OCI-LY7 (cell line): ENCODE measurements at regions of chr9 and their contacts with region 1.

Region 1: GRCh38 chr9:125428060-125428901 is 166.7 kb downstream of the GAPVD1 start:
- DNase-seq: peak; percentile 64
- H3K4me3 ChIP-seq: no peak overlapping the region
- H3K27ac ChIP-seq: no peak overlapping the region
- H3K4me1 ChIP-seq: no peaks in the 10 kb centered on the region
- CTCF ChIP-seq: peak; percentile 86

Region 2: DNA sequence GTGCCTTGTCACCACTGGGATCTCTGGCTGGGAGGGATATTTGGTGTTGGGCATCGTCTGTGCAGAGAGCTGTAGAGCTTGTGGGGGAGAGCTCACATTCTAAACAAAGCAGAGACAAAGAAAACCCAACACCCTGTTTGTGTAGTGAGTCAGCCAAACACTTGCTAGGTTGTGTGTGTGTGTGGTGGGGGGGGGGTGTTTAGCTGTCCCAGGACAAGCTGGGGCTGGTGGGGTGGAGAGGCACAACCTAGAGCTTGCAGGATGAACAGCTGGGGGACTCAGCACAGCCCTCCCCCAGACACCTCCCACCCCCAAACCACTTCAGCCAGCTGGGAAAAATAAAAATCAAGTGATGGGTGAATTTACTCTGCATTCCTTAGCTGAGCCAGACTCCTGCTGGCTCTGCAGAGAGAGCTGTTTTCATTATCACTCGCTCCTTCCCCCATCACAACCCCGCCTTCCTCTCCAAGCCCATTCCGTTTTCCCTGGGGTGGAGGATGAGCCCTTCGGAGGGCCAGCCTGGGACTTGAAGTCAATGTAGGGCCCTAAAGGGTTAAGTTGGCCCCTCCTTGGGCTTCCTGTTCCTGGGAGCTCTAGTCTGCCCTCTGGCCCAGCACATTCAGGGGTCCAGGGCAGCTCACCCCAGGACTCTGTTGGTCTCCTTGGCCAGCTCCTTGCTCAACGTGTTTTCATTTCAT is 648.8 kb before region 1 on chr9:
- CTCF ChIA-PET with region 1: no interaction called
- POLR2A ChIA-PET with region 1: no interaction called
- intact Hi-C with region 1: no loop called
- DNase-seq: no peak
- H3K4me3 ChIP-seq: no peak overlapping the region
- H3K27ac ChIP-seq: no peak overlapping the region
- H3K4me1 ChIP-seq: peaks cover 19% of the 10 kb centered on the region
- CTCF ChIP-seq: no peak

Region 3: DNA sequence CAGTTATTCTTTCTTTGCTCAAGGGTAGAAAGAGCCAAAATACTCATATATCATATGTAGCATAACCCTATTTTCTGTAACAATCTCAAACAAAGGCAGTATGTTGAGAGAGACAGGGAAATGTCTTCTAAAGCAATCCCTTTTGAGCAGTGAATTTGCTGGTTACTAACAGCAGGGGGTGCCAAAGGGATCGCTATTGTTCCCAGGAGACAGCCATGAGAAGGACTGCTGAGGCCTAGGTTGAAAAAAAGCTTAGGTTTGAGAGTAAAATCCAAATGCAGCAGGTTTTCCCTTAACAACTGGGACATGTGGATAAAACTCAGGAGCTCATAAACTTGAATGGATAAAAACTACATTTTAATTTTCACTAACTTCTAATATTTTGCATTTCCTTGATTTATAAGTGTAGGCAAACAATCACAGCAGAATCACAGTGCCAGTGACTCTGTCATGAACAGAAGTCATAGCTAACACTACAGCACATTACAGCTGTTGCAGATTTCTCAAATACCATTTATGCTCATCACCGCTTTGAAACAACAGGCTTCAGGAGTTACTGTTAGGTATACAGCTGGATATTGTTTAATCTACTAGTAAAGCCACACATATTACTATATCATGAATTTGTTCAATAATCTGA is 130.3 kb after region 1 on chr9:
- CTCF ChIA-PET with region 1: no interaction called
- POLR2A ChIA-PET with region 1: no interaction called
- intact Hi-C with region 1: loop called (anchors 2 kb)
- DNase-seq: peak; percentile 72
- H3K4me3 ChIP-seq: no peak overlapping the region
- H3K27ac ChIP-seq: no peak overlapping the region
- H3K4me1 ChIP-seq: peaks cover 9% of the 10 kb centered on the region
- CTCF ChIP-seq: peak; percentile 95

Region 4: GRCh38 chr9:125904155-125904851 is 476.0 kb after region 1 on chr9:
- CTCF ChIA-PET with region 1: no interaction called
- POLR2A ChIA-PET with region 1: no interaction called
- intact Hi-C with region 1: no loop called
- DNase-seq: no peak
- H3K4me3 ChIP-seq: no peak overlapping the region
- H3K27ac ChIP-seq: no peak overlapping the region
- H3K4me1 ChIP-seq: no peaks in the 10 kb centered on the region
- CTCF ChIP-seq: no peak